B cell (primary cell): ENCODE measurements at regions of chr2 and their contacts with region 1.

Region 1: GRCh38 chr2:127067620-127068350 is 39.2 kb downstream of the BIN1 start:
- DNase-seq: peak; percentile 78
- ATAC-seq: peak; percentile 72
- H3K4me3 ChIP-seq: no peak overlapping the region
- H3K4me3 Mint-ChIP-seq: no peak overlapping the region
- H3K27ac ChIP-seq: no peak overlapping the region
- H3K27ac Mint-ChIP-seq: peak overlapping the region; percentile 62
- H3K4me1 ChIP-seq: peaks cover 0 to 8% of the 10 kb centered on the region in 2 donors
- H3K4me1 Mint-ChIP-seq: peaks cover 15% of the 10 kb centered on the region
- H3K27me3 ChIP-seq: no peaks in the 10 kb centered on the region
- H3K27me3 Mint-ChIP-seq: no peaks in the 10 kb centered on the region
- CTCF ChIP-seq: peak; percentile 83

Region 2: GRCh38 chr2:126907671-126908070 is 160.1 kb before region 1 on chr2:
- CTCF ChIA-PET with region 1: no interaction called
- POLR2A ChIA-PET with region 1: no interaction called
- intact Hi-C with region 1: no loop called
- DNase-seq: no peak
- ATAC-seq: no peak
- H3K4me3 ChIP-seq: no peak overlapping the region
- H3K4me3 Mint-ChIP-seq: no peak overlapping the region
- H3K27ac ChIP-seq: no peak overlapping the region
- H3K27ac Mint-ChIP-seq: no peak overlapping the region
- H3K4me1 ChIP-seq: peaks cover 7 to 10% of the 10 kb centered on the region in 2 donors
- H3K4me1 Mint-ChIP-seq: peaks cover 17% of the 10 kb centered on the region
- H3K27me3 ChIP-seq: peaks cover 0 to under 1% (median 0%) of the 10 kb centered on the region in 4 experiments
- H3K27me3 Mint-ChIP-seq: peaks cover 30% of the 10 kb centered on the region
- CTCF ChIP-seq: no peak

Region 3: DNA sequence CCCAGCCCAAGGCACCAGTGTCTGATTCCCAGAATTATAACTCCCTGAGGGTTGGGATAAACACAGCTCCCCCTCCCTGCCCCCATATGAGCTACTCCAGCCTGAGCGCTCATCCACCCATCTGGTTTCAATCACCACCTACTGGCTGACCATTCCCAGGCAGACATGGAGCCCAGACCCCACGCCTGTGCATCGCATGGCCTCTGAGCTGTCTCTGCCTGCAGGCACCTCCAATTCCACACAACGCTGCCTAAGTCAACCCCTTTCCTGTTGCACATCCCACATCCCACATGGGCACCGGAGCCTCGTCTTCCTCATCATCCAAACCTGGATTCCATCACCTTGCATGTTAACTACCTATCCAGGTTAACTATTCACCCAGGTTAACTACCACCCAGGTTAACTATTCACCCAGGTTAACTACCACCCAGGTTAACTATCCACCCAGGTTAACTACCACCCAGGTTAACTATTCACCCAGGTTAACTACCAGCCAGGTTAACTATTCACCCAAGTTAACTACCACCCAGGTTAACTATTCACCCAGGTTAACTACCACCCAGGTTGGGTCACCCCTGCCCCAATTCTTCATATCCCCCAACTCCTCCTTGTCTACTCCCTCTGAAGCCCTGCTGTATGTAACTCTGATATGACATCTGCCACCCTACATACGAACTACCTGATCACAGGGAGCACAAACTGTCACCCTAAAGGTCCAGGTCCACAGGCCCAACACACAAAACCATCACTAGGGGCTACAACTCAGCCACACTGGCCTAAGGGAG is 121.3 kb before region 1 on chr2:
- CTCF ChIA-PET with region 1: no interaction called
- POLR2A ChIA-PET with region 1: no interaction called
- intact Hi-C with region 1: no loop called
- DNase-seq: no peak
- ATAC-seq: no peak
- H3K4me3 ChIP-seq: no peak overlapping the region
- H3K4me3 Mint-ChIP-seq: no peak overlapping the region
- H3K27ac ChIP-seq: no peak overlapping the region
- H3K27ac Mint-ChIP-seq: no peak overlapping the region
- H3K4me1 ChIP-seq: no peaks in the 10 kb centered on the region
- H3K4me1 Mint-ChIP-seq: no peaks in the 10 kb centered on the region
- H3K27me3 ChIP-seq: peaks cover 0 to 3% (median 0%) of the 10 kb centered on the region in 4 experiments
- H3K27me3 Mint-ChIP-seq: peaks cover 9% of the 10 kb centered on the region
- CTCF ChIP-seq: no peak

Region 4: GRCh38 chr2:127014630-127015029 is 53.2 kb before region 1 on chr2:
- CTCF ChIA-PET with region 1: no interaction called
- POLR2A ChIA-PET with region 1: no interaction called
- intact Hi-C with region 1: no loop called
- DNase-seq: no peak
- ATAC-seq: no peak
- H3K4me3 ChIP-seq: no peak overlapping the region
- H3K4me3 Mint-ChIP-seq: no peak overlapping the region
- H3K27ac ChIP-seq: no peak overlapping the region
- H3K27ac Mint-ChIP-seq: no peak overlapping the region
- H3K4me1 ChIP-seq: no peaks in the 10 kb centered on the region
- H3K4me1 Mint-ChIP-seq: no peaks in the 10 kb centered on the region
- H3K27me3 ChIP-seq: peaks cover 0 to 21% (median 3%) of the 10 kb centered on the region in 4 experiments
- H3K27me3 Mint-ChIP-seq: peaks cover 48% of the 10 kb centered on the region
- CTCF ChIP-seq: no peak

Region 5: DNA sequence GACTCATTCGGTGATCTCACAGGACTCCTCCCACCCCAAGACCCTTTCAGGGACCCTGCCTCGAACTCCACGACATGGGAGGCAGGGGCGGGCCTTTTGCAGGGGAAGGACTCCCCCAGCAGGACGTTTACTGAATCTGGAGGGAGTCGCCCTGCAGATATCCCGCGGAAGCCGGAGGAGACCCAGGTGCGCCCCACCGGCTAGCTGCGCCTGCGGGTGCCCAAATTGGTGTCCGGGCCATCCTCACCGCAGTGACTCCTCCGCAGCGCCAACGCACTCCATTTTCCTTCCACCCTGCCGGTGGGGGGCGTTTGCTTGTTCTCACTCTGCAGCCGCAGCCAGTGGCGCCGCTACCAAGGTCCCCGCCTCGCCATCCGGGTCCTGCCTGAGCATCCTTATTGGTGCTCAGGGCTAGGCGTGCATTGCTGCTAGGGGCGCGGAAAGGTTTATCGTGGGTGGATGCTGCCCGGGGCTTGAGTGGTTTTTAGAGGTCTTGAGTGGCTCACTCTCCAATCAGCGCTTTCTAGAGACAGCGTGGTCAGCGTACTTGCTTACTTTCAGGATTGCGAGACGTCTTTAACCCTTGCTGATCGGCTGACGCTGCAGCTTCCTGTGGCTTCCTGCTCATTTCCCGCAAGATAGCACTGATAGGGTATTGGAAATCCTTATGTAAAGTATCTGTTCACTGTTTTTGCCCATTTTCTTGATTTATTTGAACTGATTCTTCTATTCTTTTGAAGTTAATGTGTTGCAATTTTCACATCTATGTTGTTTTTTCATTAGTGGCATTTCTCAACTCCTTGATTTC is 42.2 kb before region 1 on chr2:
- CTCF ChIA-PET with region 1: no interaction called
- POLR2A ChIA-PET with region 1: no interaction called
- intact Hi-C with region 1: no loop called
- DNase-seq: peak; percentile 60
- ATAC-seq: peak; percentile 91
- H3K4me3 ChIP-seq: peak overlapping the region in 4 of 5 experiments; percentile 13 to 59 (median 38)
- H3K4me3 Mint-ChIP-seq: peak overlapping the region; percentile 88
- H3K27ac ChIP-seq: no peak overlapping the region
- H3K27ac Mint-ChIP-seq: peak overlapping the region; percentile 37
- H3K4me1 ChIP-seq: peaks cover 12 to 14% of the 10 kb centered on the region in 2 donors
- H3K4me1 Mint-ChIP-seq: peaks cover 11% of the 10 kb centered on the region
- H3K27me3 ChIP-seq: peaks cover 0 to 37% (median 16%) of the 10 kb centered on the region in 4 experiments
- H3K27me3 Mint-ChIP-seq: peaks cover 40% of the 10 kb centered on the region
- CTCF ChIP-seq: no peak

Region 6: GRCh38 chr2:127081826-127082633 is 14.2 kb after region 1 on chr2:
- CTCF ChIA-PET with region 1: interaction called, 42 read pairs
- POLR2A ChIA-PET with region 1: interaction called, 5 read pairs
- intact Hi-C with region 1: loop called (anchors 1 kb)
- DNase-seq: peak; percentile 84
- ATAC-seq: peak; percentile 65
- H3K4me3 ChIP-seq: peak overlapping the region in 4 of 5 experiments; percentile 65 to 88 (median 82)
- H3K4me3 Mint-ChIP-seq: peak overlapping the region; percentile 92
- H3K27ac ChIP-seq: peak overlapping the region; percentile 96 to 98
- H3K27ac Mint-ChIP-seq: peak overlapping the region; percentile 99
- H3K4me1 ChIP-seq: peaks cover 78 to 95% of the 10 kb centered on the region in 2 donors
- H3K4me1 Mint-ChIP-seq: peaks cover 94% of the 10 kb centered on the region
- H3K27me3 ChIP-seq: no peaks in the 10 kb centered on the region
- H3K27me3 Mint-ChIP-seq: no peaks in the 10 kb centered on the region
- CTCF ChIP-seq: no peak

Region 7: DNA sequence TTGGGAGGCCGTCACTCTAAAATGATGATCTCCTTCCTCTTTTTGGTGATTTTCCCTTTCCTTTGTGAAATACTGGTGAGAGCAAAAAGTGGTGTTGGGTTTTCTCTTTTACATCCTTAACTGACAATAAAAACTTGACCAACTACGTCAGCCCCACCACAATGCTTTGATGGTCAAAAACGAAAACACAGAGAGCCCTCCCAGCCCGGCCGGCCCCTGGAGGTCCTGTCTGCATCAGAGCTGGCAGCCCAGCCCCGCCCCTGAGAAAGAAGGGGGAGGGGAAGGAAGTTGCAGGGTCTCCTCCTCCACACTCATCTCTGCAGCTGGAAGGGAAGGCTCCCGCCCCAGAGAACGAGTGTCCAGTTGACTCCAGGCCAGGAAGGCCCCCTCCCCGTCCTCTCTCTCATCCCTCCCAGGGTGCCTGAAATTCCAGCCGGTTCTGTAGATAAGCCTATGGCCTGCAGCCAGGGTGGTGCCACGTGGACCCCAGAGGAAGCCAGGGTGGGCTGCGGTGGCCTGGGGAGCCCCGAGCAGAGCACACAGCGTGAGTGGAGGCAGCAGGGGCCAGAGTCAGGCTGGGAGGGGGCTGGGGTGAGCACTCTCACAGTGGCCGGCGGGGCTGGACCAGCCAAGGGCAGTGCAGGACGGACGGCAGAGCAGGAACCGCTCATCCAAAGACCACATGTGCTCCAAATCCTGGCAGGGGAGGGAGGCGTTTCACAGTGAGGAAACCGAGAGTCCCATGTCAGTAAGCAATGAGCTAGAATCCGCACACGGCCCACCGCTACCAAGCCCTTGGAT is 19.4 kb after region 1 on chr2:
- CTCF ChIA-PET with region 1: interaction called, 42 read pairs
- POLR2A ChIA-PET with region 1: no interaction called
- intact Hi-C with region 1: no loop called
- DNase-seq: peak; percentile 76
- ATAC-seq: peak; percentile 1
- H3K4me3 ChIP-seq: peak overlapping the region in 4 of 5 experiments; percentile 23 to 72 (median 44)
- H3K4me3 Mint-ChIP-seq: peak overlapping the region; percentile 81
- H3K27ac ChIP-seq: peak overlapping the region; percentile 42 to 55
- H3K27ac Mint-ChIP-seq: peak overlapping the region; percentile 90
- H3K4me1 ChIP-seq: peaks cover 53 to 62% of the 10 kb centered on the region in 2 donors
- H3K4me1 Mint-ChIP-seq: peaks cover 61% of the 10 kb centered on the region
- H3K27me3 ChIP-seq: no peaks in the 10 kb centered on the region
- H3K27me3 Mint-ChIP-seq: no peaks in the 10 kb centered on the region
- CTCF ChIP-seq: no peak

Region 8: DNA sequence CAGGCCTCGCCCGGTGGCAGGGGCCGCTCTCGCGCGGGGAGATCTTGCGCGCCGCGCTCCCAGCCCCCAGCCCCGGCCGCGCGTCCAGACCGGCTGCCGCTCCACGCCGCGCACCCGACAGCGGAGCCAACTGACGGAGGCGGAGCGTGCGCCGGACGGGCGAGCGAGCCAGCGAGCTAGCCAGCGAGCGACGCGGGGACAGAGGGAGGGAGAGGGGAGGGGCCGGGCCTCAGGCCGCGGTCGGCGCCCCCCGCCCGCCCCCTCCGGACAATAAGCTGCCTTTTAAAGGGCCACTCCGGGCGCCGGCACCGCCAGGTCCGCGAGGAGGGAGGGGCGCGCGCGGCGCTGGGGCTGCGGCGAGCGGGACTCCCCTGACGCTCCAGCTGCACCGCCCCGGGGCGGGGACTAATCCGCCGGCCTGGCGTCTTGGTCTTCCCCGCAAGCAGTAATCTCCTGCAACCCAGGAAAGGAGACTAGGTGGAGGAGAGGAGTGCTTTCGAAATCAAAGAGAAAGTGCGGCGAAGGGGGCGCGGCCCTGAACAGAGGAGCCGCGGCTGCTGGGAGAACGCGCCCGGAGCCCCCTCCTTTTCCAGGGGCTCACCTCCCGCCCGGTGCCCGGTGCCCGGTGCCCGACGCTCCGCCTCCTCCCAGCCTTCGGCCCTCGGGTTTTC is 39.3 kb after region 1 on chr2 and contains the start of gene BIN1:
- CTCF ChIA-PET with region 1: interaction called, 8 read pairs
- POLR2A ChIA-PET with region 1: interaction called, 4 read pairs
- intact Hi-C with region 1: loop called (anchors 1 kb)
- DNase-seq: peak; percentile 81
- ATAC-seq: peak; percentile 84
- H3K4me3 ChIP-seq: peak within 1 kb of the TSS; percentile 23 to 91 (median 69)
- H3K4me3 Mint-ChIP-seq: peak within 1 kb of the TSS; percentile 88
- H3K27ac ChIP-seq: peak within 1 kb of the TSS in 1 of 2 donors; percentile 33
- H3K27ac Mint-ChIP-seq: no peak within 1 kb of the TSS
- H3K4me1 ChIP-seq: peaks cover 21 to 29% of the 10 kb centered on the region in 2 donors
- H3K4me1 Mint-ChIP-seq: peaks cover 13% of the 10 kb centered on the region
- H3K27me3 ChIP-seq: peaks cover 0 to 26% (median 7%) of the 10 kb centered on the region in 4 experiments
- H3K27me3 Mint-ChIP-seq: peaks cover 9% of the 10 kb centered on the region
- CTCF ChIP-seq: no peak
- total RNA-seq, gene BIN1: 90.6 and 93.9 TPM in 2 replicates

Region 9: GRCh38 chr2:127157651-127158470 is 90.1 kb after region 1 on chr2:
- CTCF ChIA-PET with region 1: interaction called, 10 read pairs
- POLR2A ChIA-PET with region 1: no interaction called
- intact Hi-C with region 1: no loop called
- DNase-seq: no peak
- ATAC-seq: no peak
- H3K4me3 ChIP-seq: no peak overlapping the region
- H3K4me3 Mint-ChIP-seq: no peak overlapping the region
- H3K27ac ChIP-seq: no peak overlapping the region
- H3K27ac Mint-ChIP-seq: no peak overlapping the region
- H3K4me1 ChIP-seq: peaks cover 22 to 42% of the 10 kb centered on the region in 2 donors
- H3K4me1 Mint-ChIP-seq: peaks cover 30% of the 10 kb centered on the region
- H3K27me3 ChIP-seq: peaks cover 0 to 4% (median 0%) of the 10 kb centered on the region in 4 experiments
- H3K27me3 Mint-ChIP-seq: no peaks in the 10 kb centered on the region
- CTCF ChIP-seq: no peak

Region 10: DNA sequence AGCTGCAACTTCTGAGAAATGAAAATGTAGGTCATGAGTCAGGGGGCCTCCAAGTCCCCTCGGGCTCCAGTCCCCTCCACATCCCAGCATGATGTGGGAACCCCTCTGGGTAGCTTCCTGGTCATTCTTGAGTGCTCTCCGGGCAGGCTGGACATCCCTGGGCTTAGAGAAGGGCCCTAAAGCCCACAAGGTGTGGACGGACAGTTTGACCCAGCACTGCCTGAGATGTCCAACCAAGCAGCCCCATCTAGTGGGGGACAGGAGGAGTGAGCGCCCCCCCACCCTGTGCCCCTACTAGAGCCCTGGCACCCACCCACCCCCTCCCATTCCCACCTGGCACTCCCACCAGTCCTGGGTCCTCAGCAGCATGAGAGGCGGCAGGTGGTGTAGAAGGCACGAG is 106.4 kb after region 1 on chr2:
- CTCF ChIA-PET with region 1: interaction called, 31 read pairs
- POLR2A ChIA-PET with region 1: no interaction called
- intact Hi-C with region 1: loop called (anchors 1 kb)
- DNase-seq: peak; percentile 32
- ATAC-seq: no peak
- H3K4me3 ChIP-seq: no peak overlapping the region
- H3K4me3 Mint-ChIP-seq: no peak overlapping the region
- H3K27ac ChIP-seq: no peak overlapping the region
- H3K27ac Mint-ChIP-seq: no peak overlapping the region
- H3K4me1 ChIP-seq: no peaks in the 10 kb centered on the region
- H3K4me1 Mint-ChIP-seq: no peaks in the 10 kb centered on the region
- H3K27me3 ChIP-seq: peaks cover 0 to 5% (median 0%) of the 10 kb centered on the region in 4 experiments
- H3K27me3 Mint-ChIP-seq: peaks cover 21% of the 10 kb centered on the region
- CTCF ChIP-seq: peak; percentile 39